Left cardiac atrium (tissue), 4 donors: ENCODE measurements at regions of chr1 and their contacts with region 1.

Region 1: GRCh38 chr1:111507411-111508201 is 4.2 kb upstream of the ADORA3 start:
- DNase-seq: peak; percentile 80
- ATAC-seq: peak; percentile 65 to 81

Region 2: GRCh38 chr1:111656086-111657017 is 148.7 kb after region 1 on chr1:
- intact Hi-C with region 1: loop called (anchors 2 to 10 kb)
- DNase-seq: no peak
- ATAC-seq: peak; percentile 47 to 76

Region 3: DNA sequence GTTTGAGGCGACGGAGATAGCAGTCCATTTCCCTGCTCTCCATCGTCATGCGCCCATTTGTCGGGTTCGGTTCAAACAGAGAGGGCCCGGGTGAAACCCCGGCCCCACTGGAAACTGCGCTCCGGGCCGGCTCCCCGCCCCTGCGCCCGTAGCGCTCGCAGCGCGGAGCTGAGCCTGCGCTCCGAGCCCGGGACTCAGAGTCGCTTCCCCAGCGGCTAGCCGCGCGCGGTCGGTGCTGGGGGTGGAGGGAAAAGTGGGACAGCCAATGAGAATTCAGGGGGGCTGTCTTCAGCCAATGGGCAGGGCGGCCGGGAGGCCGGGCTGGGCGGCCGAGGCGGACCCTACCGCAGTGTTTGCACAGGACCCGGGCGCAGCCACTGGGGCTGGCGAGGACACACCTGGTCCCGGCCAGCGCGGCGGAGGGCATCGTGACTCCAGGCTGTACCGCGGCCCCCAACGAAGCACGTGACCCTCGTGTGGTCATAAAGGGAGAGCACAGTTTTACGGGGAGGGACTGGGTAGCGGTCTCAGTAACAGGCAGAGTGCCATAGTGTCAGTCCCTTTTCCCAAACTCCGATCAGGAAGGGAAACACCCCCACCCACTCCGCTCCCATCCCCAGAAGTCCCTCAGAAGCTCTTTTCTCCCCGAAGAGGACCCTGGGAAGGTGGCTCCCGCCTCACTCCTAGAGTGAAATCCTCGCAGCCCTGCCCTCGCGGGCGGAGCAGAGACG is 231.8 kb after region 1 on chr1 and contains the start of gene INKA2:
- intact Hi-C with region 1: loop called in 1 of 2 experiments (anchors 5 kb)
- DNase-seq: peak; percentile 91
- ATAC-seq: peak; percentile 82 to 85
- total RNA-seq, gene INKA2: 18.4 to 31.7 TPM